Sigmoid colon (tissue), 7 donors: ENCODE measurements at regions of chr18 and their contacts with region 1.

Region 1: DNA sequence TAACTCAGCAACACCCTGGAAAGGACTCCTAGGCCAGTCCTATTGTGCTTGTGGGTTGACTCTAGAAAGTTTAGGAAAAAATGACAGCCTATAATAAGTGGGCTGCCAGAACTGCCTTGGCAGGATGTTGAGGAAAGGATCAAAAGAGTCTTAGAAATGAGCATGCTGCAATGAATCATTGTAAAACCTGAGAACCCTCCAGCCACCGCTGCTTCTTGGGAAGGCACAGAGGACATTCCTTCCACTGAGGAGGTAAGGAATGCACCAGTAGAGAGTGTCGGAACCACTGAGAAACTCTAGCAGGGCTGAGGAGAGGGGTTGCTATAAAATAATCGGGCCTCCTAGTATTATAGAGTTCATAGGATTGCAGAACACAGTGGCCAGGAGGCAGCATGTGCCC is 146.7 kb upstream of the SMIM21 start:
- DNase-seq: no peak
- H3K4me3 ChIP-seq: no peak overlapping the region
- H3K27ac ChIP-seq: no peak overlapping the region
- H3K4me1 ChIP-seq: no peaks in the 10 kb centered on the region
- H3K27me3 ChIP-seq: no peaks in the 10 kb centered on the region
- CTCF ChIP-seq: no peak
- EP300 ChIP-seq: no peak
- POLR2A ChIP-seq: no peak

Region 2: DNA sequence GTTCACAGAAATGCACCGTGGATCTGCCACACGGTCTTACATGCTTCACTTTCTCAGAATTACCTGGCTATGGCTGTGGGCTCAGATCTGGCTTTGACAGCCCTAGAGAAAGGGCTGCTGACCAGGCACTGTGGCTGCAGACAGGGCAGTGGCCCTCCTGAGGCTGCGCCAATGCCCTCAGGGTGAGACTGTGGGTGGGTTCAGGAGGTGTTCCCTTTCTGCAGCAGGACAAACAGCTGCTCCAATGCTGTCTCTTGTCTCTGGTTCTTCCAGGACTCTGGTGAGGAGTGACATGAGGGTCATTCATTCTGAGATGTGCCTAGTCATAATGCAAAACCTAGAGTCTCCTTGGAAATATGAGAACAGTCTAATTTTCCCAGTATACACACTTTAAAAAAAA is 56.2 kb before region 1 on chr18:
- intact Hi-C with region 1: loop called (anchors 5 kb)
- DNase-seq: no peak
- H3K4me3 ChIP-seq: no peak overlapping the region
- H3K27ac ChIP-seq: no peak overlapping the region
- H3K4me1 ChIP-seq: no peaks in the 10 kb centered on the region
- H3K27me3 ChIP-seq: no peaks in the 10 kb centered on the region
- CTCF ChIP-seq: no peak
- EP300 ChIP-seq: no peak
- POLR2A ChIP-seq: no peak

Region 3: GRCh38 chr18:75592527-75592926 is 18.3 kb after region 1 on chr18:
- intact Hi-C with region 1: loop called (anchors 2 kb)
- DNase-seq: no peak
- H3K4me3 ChIP-seq: no peak overlapping the region
- H3K27ac ChIP-seq: no peak overlapping the region
- H3K4me1 ChIP-seq: no peaks in the 10 kb centered on the region
- H3K27me3 ChIP-seq: no peaks in the 10 kb centered on the region
- CTCF ChIP-seq: no peak
- EP300 ChIP-seq: no peak
- POLR2A ChIP-seq: no peak

Region 4: GRCh38 chr18:76528477-76529432 is 954.6 kb after region 1 on chr18:
- intact Hi-C with region 1: no loop called
- DNase-seq: peak; percentile 82
- H3K4me3 ChIP-seq: peak overlapping the region; percentile 5 to 46 (median 40)
- H3K27ac ChIP-seq: peak overlapping the region; percentile 39 to 67 (median 54)
- H3K4me1 ChIP-seq: peaks cover 0 to 20% (median 10%) of the 10 kb centered on the region in 4 donors
- H3K27me3 ChIP-seq: no peaks in the 10 kb centered on the region
- CTCF ChIP-seq: no peak
- EP300 ChIP-seq: no peak
- POLR2A ChIP-seq: peak in 1 of 2 donors; percentile 10